HepG2 (cell line): ENCODE measurements at regions of chr14 and their contacts with region 1.

Region 1: DNA sequence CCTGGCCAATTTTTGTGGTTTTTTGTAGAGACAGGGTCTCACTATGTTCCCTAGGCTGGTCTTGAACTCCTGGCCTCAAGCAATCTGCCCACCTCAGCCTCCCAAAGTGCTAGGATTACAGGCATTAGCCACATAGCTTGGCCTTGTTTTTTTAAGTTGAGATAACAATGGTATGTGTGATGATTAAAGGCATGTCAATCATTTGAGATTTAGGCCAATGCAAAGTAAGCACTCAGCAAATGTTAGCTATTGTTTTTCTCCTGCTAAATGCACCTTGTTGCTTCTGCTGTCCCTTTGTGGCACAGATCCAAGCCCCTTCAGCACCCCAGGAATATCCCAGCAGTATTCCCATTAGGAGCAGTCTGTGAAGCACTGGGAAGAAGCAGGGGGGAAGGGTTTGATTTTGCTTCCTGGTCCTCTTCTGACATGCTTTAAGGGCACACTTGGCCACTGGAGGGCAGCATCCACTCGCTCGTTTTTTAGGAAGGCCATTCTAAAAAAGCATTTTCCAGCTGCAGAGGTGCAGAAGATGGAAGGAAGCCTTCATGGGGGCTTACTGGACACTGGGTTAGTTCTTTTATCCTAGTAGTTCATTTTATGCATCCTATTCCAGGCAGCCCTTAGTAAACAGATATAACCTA is 70.2 kb upstream of the ZFP36L1 start:
- DNase-seq: peak; percentile 76
- ATAC-seq: peak; percentile 71
- H3K4me3 ChIP-seq: no peak overlapping the region
- H3K27ac ChIP-seq: no peak overlapping the region
- H3K4me1 ChIP-seq: peaks cover 14% of the 10 kb centered on the region; the same call in 1 of the 2 replicates
- H3K27me3 ChIP-seq: no peaks in the 10 kb centered on the region
- CTCF ChIP-seq: peak; percentile 92
- EP300 ChIP-seq: no peak
- POLR2A ChIP-seq: no peak
- RAD21 ChIP-seq: peak; percentile 71

Region 2: DNA sequence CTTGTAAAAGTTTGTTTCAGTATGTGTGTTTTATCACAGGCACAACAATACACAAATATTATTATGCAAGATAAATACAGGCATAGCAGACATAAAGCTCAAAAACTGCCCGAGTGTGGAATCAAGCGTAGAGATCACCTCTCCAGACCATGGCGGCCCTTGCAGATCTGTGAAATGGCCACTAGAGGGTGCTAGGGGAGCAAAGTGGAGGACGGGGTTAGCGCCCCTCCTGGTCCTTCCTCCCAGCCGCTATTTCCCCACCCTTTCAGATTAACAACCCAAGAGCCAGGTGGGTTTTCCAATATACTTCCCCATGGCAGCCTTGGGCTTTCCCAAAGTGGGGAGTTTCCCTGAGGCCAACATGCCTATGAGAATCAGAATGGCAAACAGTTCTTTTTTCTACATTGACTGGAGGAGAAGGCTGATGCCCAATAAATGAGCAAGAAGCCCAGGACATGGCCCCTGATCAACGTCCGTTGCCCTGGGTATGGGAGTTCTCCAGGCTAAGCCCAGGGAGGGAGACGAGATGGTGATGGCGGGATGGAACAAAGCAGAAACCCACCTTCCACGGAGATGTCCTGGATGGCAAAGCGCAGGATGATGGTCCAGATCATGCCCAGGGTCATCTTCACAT is 48.6 kb after region 1 on chr14:
- CTCF ChIA-PET with region 1: no interaction called
- POLR2A ChIA-PET with region 1: no interaction called
- in situ Hi-C with region 1: no loop called
- intact Hi-C with region 1: no loop called
- DNase-seq: peak; percentile 74
- ATAC-seq: peak; percentile 95
- H3K4me3 ChIP-seq: no peak overlapping the region
- H3K27ac ChIP-seq: no peak overlapping the region
- H3K4me1 ChIP-seq: peaks cover 13% of the 10 kb centered on the region
- H3K27me3 ChIP-seq: no peaks in the 10 kb centered on the region
- CTCF ChIP-seq: peak; percentile 93
- EP300 ChIP-seq: no peak
- POLR2A ChIP-seq: no peak
- RAD21 ChIP-seq: peak; percentile 91

Region 3: GRCh38 chr14:68939893-68940613 is 77.0 kb after region 1 on chr14:
- CTCF ChIA-PET with region 1: no interaction called
- POLR2A ChIA-PET with region 1: no interaction called
- in situ Hi-C with region 1: no loop called
- intact Hi-C with region 1: no loop called
- DNase-seq: peak; percentile 78
- ATAC-seq: peak; percentile 25
- H3K4me3 ChIP-seq: peak overlapping the region in 2 of 3 experiments; percentile 31 to 64; a peak in 3 of 6 replicates
- H3K27ac ChIP-seq: peak overlapping the region; percentile 78
- H3K4me1 ChIP-seq: peaks cover 93% of the 10 kb centered on the region
- H3K27me3 ChIP-seq: no peaks in the 10 kb centered on the region
- CTCF ChIP-seq: no peak
- EP300 ChIP-seq: peak in 1 of 2 experiments; percentile 20; a peak in 1 of 4 replicates
- POLR2A ChIP-seq: no peak
- RAD21 ChIP-seq: no peak

Region 4: GRCh38 chr14:69090187-69090789 is 227.2 kb after region 1 on chr14:
- CTCF ChIA-PET with region 1: interaction called, 4 read pairs
- POLR2A ChIA-PET with region 1: no interaction called
- in situ Hi-C with region 1: no loop called
- intact Hi-C with region 1: loop called (anchors 5 kb)
- DNase-seq: peak; percentile 33
- ATAC-seq: no peak
- H3K4me3 ChIP-seq: no peak overlapping the region
- H3K27ac ChIP-seq: no peak overlapping the region
- H3K4me1 ChIP-seq: peaks cover 26% of the 10 kb centered on the region
- H3K27me3 ChIP-seq: no peaks in the 10 kb centered on the region
- CTCF ChIP-seq: peak; percentile 68
- EP300 ChIP-seq: no peak
- POLR2A ChIP-seq: no peak
- RAD21 ChIP-seq: peak; percentile 22; the same call in 1 of the 2 replicates

Region 5: GRCh38 chr14:69107407-69108003 is 244.4 kb after region 1 on chr14:
- CTCF ChIA-PET with region 1: interaction called, 17 read pairs
- POLR2A ChIA-PET with region 1: no interaction called
- in situ Hi-C with region 1: loop called (anchors 5 kb)
- intact Hi-C with region 1: loop called (anchors 1 kb)
- DNase-seq: peak; percentile 69
- ATAC-seq: peak; percentile 85
- H3K4me3 ChIP-seq: no peak overlapping the region
- H3K27ac ChIP-seq: no peak overlapping the region
- H3K4me1 ChIP-seq: no peaks in the 10 kb centered on the region
- H3K27me3 ChIP-seq: no peaks in the 10 kb centered on the region
- CTCF ChIP-seq: peak; percentile 87
- EP300 ChIP-seq: no peak
- POLR2A ChIP-seq: no peak
- RAD21 ChIP-seq: peak; percentile 87